Ascending aorta (tissue), 2 donors: ENCODE measurements at regions of chr10 and their contacts with region 1.

Region 1: DNA sequence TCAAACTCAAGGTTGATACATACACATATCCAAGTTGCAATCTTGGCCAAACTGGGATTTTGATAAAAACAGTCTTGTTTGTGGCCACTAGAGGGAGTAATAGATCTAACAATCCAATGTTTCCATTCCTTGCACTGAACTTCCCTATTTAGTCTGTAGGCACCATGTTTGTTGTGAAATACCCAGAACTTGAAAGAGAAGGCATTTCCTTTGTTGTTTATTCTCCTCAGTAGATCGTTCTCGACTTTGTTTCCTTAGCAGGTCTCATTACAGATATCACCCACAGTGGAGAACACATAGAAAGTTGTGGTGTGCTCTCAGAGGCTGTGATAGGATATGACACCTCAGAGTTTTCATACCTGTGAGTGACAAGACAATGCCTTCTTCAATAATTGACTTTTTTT is 70.3 kb upstream of the MXI1 start:
- DNase-seq: no peak
- H3K4me3 ChIP-seq: no peak overlapping the region
- H3K27ac ChIP-seq: peak overlapping the region; percentile 38 to 53
- H3K4me1 ChIP-seq: peaks cover 0 to 15% of the 10 kb centered on the region in 2 donors
- H3K27me3 ChIP-seq: no peaks in the 10 kb centered on the region
- CTCF ChIP-seq: peak; percentile 72 to 86 (median 78)

Region 2: GRCh38 chr10:109517748-109518147 is 619.4 kb before region 1 on chr10:
- intact Hi-C with region 1: no loop called
- DNase-seq: no peak
- H3K4me3 ChIP-seq: no peak overlapping the region
- H3K27ac ChIP-seq: no peak overlapping the region
- H3K4me1 ChIP-seq: no peaks in the 10 kb centered on the region
- H3K27me3 ChIP-seq: no peaks in the 10 kb centered on the region
- CTCF ChIP-seq: no peak

Region 3: GRCh38 chr10:109852475-109853037 is 284.6 kb before region 1 on chr10:
- intact Hi-C with region 1: no loop called
- DNase-seq: peak in 1 of 2 donors; percentile 74
- H3K4me3 ChIP-seq: no peak overlapping the region
- H3K27ac ChIP-seq: no peak overlapping the region
- H3K4me1 ChIP-seq: peaks cover 0 to 4% of the 10 kb centered on the region in 2 donors
- H3K27me3 ChIP-seq: no peaks in the 10 kb centered on the region
- CTCF ChIP-seq: peak; percentile 64 to 93 (median 86)

Region 4: DNA sequence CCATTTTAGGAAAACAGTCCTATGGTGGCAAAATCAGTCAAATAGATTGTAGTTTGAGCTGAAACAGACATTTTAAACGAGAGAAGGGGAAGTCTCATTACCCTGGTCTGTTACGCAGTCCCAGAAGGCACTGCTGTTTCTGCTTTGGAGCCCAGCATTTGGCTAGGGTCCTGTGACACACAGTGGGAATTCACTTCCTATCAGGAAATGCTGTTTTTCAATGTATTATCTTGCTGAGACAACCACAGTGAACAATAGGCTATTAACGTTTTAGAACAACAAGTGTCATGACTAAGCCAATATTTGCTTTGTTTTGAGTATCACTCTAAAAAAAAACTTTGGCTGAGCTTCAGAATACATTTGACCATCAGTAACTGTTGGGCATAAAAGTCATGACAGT is 55.2 kb before region 1 on chr10:
- intact Hi-C with region 1: no loop called
- DNase-seq: no peak
- H3K4me3 ChIP-seq: no peak overlapping the region
- H3K27ac ChIP-seq: peak overlapping the region in 1 of 2 donors; percentile 1
- H3K4me1 ChIP-seq: peaks cover 5 to 23% of the 10 kb centered on the region in 2 donors
- H3K27me3 ChIP-seq: no peaks in the 10 kb centered on the region
- CTCF ChIP-seq: no peak

Region 5: DNA sequence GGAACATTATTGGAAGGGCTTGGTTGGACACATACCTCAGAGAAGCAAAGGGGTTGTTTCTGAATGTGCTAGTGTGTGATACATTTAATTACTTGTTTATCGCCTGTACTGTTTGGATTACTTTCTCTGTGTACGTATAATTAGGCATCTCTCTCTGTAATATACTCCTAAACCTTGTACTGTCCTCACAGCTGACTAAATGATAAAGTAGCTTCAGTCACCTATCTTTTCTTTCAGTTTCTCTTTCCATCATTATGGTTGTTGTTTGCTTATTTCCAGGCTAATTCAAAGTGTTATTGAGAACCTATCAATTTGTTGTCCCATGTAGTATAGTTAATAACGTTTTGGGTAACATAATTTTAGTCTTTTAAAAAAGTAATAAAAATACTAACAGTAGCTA is 104.3 kb after region 1 on chr10:
- intact Hi-C with region 1: no loop called
- DNase-seq: no peak
- H3K4me3 ChIP-seq: no peak overlapping the region
- H3K27ac ChIP-seq: no peak overlapping the region
- H3K4me1 ChIP-seq: peaks cover 0 to 13% of the 10 kb centered on the region in 2 donors
- H3K27me3 ChIP-seq: no peaks in the 10 kb centered on the region
- CTCF ChIP-seq: no peak

Region 6: DNA sequence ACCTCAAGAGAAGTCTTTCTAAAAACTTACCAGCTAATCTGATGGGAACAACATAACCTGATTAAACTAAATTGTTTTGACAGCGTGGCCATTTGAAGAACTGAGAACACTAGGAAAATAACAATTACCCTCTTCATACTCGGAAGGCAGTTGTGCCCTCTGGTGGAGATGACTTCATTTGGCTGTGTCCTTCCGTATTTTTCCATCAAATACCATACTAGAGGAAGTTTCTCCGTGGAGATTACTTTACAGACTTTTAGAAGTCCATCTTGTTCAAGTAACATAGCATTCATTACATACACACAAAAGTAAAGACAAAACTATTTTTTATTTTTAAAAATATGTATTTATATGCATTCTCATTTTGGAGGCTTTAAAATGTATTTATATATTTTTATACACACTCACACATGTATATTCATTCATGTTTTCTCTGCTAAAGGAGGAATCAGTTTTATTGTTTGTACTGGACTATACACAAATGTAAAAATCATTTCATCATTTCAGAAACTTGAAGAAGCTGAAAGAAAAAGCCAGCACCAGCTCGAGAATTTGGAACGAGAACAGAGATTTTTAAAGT is 142.4 kb after region 1 on chr10:
- intact Hi-C with region 1: loop called (anchors 1 kb)
- DNase-seq: peak in 1 of 2 donors; percentile 81
- H3K4me3 ChIP-seq: peak overlapping the region; percentile 14 to 33
- H3K27ac ChIP-seq: peak overlapping the region; percentile 30 to 42
- H3K4me1 ChIP-seq: peaks cover 0 to 46% of the 10 kb centered on the region in 2 donors
- H3K27me3 ChIP-seq: no peaks in the 10 kb centered on the region
- CTCF ChIP-seq: peak; percentile 66 to 78 (median 76)

Region 7: DNA sequence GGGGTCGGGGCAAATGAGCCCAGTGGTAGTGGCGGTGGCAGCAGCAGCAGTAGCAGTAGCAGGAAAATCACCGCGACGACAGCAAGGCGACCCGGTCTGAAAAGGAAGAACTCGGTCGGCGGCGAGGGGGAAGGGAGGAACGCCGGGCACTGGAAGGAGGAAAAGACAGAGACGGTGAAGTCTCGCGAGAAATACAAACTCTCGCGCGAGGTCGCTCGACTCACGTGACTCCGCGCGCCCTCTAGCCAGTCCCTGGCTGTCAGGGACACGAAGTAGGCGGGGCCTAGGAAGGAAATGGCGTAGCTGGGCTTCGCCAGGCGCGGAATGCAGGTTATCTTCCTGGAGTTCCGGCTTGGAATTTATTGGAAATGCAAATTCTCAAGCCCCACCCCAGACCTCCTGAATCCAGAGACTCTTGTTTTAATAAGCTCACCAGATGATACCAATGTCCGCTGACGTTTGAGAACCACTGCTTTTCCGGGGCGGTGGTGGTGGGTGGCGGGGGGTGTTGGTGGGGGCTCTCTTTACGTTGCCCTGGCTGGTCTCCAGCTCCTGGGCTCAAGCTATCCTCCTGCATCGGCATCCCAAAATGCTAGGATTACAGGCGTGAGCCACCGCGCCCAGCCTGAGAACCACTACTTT is 167.8 kb after region 1 on chr10 and contains the start of gene SMNDC1:
- intact Hi-C with region 1: loop called (anchors 2 kb)
- DNase-seq: peak; percentile 90 to 99
- H3K4me3 ChIP-seq: peak within 1 kb of the TSS; percentile 75 to 99
- H3K27ac ChIP-seq: peak within 1 kb of the TSS; percentile 95 to 96
- H3K4me1 ChIP-seq: peaks cover 5 to 36% of the 10 kb centered on the region in 2 donors
- H3K27me3 ChIP-seq: no peaks in the 10 kb centered on the region
- CTCF ChIP-seq: no peak
- total RNA-seq, gene SMNDC1: 6.9 TPM

Region 8: GRCh38 chr10:110547139-110547761 is 410.1 kb after region 1 on chr10:
- intact Hi-C with region 1: loop called (anchors 2 kb)
- DNase-seq: no peak
- H3K4me3 ChIP-seq: no peak overlapping the region
- H3K27ac ChIP-seq: no peak overlapping the region
- H3K4me1 ChIP-seq: no peaks in the 10 kb centered on the region
- H3K27me3 ChIP-seq: no peaks in the 10 kb centered on the region
- CTCF ChIP-seq: peak; percentile 49 to 86 (median 82)